ENCODE measurements at regions of chr19 and their contacts with region 1.

Region 1: GRCh38 chr19:8412783-8413628 is at the start of gene MARCHF2:
- H3K4me3 Mint-ChIP-seq: peak within 1 kb of the TSS; percentile 63
- H3K27ac Mint-ChIP-seq: peak within 1 kb of the TSS; percentile 61
- H3K4me1 Mint-ChIP-seq: peaks cover 23% of the 10 kb centered on the region
- H3K27me3 Mint-ChIP-seq: no peaks in the 10 kb centered on the region

Region 2: GRCh38 chr19:8251025-8251472 is 162.0 kb before region 1 on chr19:
- intact Hi-C with region 1: no loop called
- H3K4me3 Mint-ChIP-seq: no peak overlapping the region
- H3K27ac Mint-ChIP-seq: no peak overlapping the region
- H3K4me1 Mint-ChIP-seq: no peaks in the 10 kb centered on the region
- H3K27me3 Mint-ChIP-seq: peaks cover 28% of the 10 kb centered on the region

Region 3: DNA sequence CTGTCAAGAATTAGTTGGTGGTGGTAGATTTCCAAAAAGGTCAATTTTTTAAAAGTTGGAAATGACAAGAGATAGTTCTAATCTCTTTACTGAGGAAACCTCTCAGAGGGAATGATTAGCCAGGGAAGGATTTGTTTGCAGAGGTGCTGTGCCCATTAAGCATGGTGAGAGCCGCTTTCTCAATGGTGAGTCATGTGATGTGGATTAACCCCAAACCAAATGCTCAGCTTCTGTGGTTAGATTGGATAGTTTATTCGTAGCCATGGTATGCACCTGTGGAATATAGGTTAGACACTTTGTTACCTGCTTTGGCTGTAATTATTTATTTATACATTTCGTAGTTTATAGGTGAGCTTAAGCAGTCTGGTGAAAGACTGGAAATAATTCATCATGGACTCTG is 38.9 kb after region 1 on chr19:
- intact Hi-C with region 1: loop called (anchors 2 kb)
- H3K4me3 Mint-ChIP-seq: no peak overlapping the region
- H3K27ac Mint-ChIP-seq: no peak overlapping the region
- H3K4me1 Mint-ChIP-seq: peaks cover 76% of the 10 kb centered on the region
- H3K27me3 Mint-ChIP-seq: no peaks in the 10 kb centered on the region

Region 4: DNA sequence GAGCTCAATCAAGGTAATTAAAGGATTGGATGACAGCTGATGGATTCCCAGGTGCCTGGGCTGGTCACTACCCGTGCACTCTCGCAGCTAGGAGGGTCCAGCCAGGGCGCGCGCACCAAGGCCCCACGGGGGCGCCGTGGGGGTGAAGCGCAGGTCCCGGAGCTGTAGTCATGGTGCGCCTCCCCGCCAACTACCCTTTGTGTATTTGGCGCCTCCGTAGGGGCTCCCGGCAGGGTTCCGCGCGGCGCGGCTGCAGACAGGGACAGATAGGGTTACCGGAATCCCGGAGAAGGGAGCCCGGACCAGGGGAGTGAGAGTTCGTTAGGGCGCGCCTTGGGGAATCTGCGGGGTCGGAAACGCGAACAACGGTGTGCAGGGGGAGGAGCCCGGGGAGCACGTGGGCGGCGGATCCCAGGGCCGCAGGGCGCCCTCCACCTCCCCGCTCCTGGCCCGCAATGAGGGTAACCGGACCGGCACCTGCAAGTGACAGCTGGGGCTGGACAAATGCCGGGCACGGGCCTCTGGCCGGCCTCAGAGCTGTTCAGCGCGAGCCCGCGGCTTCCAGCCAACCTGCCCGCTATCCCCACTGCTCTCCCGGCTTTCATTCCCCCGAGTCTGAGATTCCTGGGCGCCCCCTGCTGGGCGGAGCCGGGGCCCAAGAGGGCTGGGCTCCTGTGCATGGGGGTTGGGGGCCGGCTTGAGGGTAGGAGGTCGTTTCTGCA is 92.8 kb after region 1 on chr19:
- intact Hi-C with region 1: loop called (anchors 10 kb)
- H3K4me3 Mint-ChIP-seq: peak overlapping the region; percentile 90
- H3K27ac Mint-ChIP-seq: peak overlapping the region; percentile 90
- H3K4me1 Mint-ChIP-seq: peaks cover 68% of the 10 kb centered on the region
- H3K27me3 Mint-ChIP-seq: no peaks in the 10 kb centered on the region

Measured in dendritic cell treated with granulocyte-macrophage colony-stimulating factor and Interleukin-4, amounts not matched to agents 40 ng/mL and 50 ng/mL, for 4 days (primary cell).